PC-3 (cell line): ENCODE measurements at regions of chr2 and their contacts with region 1.

Region 1: DNA sequence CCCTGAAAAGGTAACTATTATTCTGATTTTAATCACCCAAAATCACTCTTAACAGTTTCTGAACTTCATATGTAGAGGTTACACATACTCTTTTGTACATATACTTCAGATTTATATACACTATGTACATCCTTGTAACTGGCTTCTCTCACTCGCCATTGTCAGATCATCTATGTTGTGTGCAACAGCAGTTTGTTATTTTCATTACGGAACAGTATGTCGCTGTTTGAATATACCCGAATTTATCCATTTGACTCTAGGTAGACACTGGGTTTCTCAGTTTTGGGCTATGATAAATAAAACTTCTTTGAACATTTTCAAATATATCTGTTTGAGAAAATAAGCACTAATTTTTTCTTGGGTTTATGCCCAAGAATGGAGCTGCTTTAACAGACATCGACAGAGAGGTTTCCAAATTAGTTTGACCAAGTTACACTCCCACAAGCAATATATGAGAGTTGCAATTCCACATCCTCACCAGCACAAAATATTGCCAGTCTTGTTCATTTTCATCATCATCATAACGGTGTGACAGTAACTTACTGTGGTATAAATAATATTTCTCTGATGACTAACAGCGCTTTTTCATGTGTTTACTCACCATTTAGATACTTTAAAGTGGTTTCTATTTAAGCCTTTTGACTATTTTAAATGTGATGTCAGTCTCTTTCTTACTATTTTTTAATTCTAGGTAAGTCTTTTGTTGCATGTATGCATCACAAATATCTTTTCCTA is 80.9 kb downstream of the SMC6 start:
- DNase-seq: peak; percentile 69
- ATAC-seq: peak; percentile 94
- H3K4me3 ChIP-seq: no peak overlapping the region
- H3K27ac ChIP-seq: no peak overlapping the region
- H3K4me1 ChIP-seq: peaks cover 7% of the 10 kb centered on the region; the same call in 1 of the 2 replicates
- H3K27me3 ChIP-seq: no peaks in the 10 kb centered on the region
- CTCF ChIP-seq: peak; percentile 30; the same call in 1 of the 2 replicates

Region 2: DNA sequence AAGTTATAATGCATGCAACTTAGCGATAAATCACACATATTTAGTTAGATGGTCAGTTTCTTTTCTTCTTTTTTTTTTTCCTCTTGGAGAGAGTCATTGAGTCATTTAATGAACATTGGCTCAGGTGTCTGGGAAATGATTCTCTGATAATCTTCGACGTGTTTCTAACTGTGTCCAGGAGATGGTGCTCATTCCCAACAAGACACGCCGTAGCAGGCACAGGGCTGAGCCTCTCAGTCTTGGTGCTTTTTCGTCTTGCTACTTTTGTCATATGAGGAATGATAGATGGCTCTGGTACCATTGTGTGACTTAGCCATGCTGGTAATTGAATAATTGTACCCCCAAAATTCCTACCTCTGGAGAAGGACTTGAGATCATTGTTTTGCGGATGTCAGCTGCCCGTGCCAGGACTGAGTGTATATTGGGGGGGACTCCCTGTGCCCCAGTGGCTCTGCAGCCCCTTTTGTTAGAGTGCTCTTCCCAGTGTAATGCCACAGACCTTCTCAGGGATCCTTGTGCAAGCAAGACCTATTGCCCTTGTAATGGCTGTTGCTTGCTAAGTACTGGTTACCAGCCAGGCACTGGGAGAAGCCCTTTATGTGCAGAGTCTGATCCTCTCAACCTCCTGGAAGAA is 899.6 kb before region 1 on chr2:
- CTCF ChIA-PET with region 1: no interaction called
- POLR2A ChIA-PET with region 1: no interaction called
- intact Hi-C with region 1: loop called (anchors 5 kb)
- DNase-seq: peak; percentile 56
- ATAC-seq: no peak
- H3K4me3 ChIP-seq: no peak overlapping the region
- H3K27ac ChIP-seq: no peak overlapping the region
- H3K4me1 ChIP-seq: no peaks in the 10 kb centered on the region
- H3K27me3 ChIP-seq: 0 out of 2 replicates have a peak, but pooled peaks cover 3% of the 10 kb centered on the region
- CTCF ChIP-seq: peak; percentile 68

Region 3: GRCh38 chr2:17309741-17310339 is 362.9 kb before region 1 on chr2:
- CTCF ChIA-PET with region 1: no interaction called
- POLR2A ChIA-PET with region 1: no interaction called
- intact Hi-C with region 1: loop called (anchors 10 kb)
- DNase-seq: peak; percentile 60
- ATAC-seq: no peak; the same call in 1 of the 2 replicates
- H3K4me3 ChIP-seq: no peak overlapping the region
- H3K27ac ChIP-seq: no peak overlapping the region
- H3K4me1 ChIP-seq: no peaks in the 10 kb centered on the region
- H3K27me3 ChIP-seq: peaks cover 6% of the 10 kb centered on the region; the same call in 1 of the 2 replicates
- CTCF ChIP-seq: peak; percentile 74

Region 4: GRCh38 chr2:17470855-17471641 is 201.7 kb before region 1 on chr2:
- CTCF ChIA-PET with region 1: no interaction called
- POLR2A ChIA-PET with region 1: no interaction called
- intact Hi-C with region 1: loop called (anchors 1 kb)
- DNase-seq: peak; percentile 43
- ATAC-seq: peak; percentile 27; the same call in 1 of the 2 replicates
- H3K4me3 ChIP-seq: peak overlapping the region; percentile 42
- H3K27ac ChIP-seq: no peak overlapping the region
- H3K4me1 ChIP-seq: peaks cover 8% of the 10 kb centered on the region; the same call in 1 of the 2 replicates
- H3K27me3 ChIP-seq: no peaks in the 10 kb centered on the region
- CTCF ChIP-seq: peak; percentile 78

Region 5: GRCh38 chr2:17646081-17646554 is 26.6 kb before region 1 on chr2:
- CTCF ChIA-PET with region 1: interaction called, 43 read pairs
- POLR2A ChIA-PET with region 1: no interaction called
- intact Hi-C with region 1: loop called (anchors 1 kb)
- DNase-seq: peak; percentile 85
- ATAC-seq: peak; percentile 57
- H3K4me3 ChIP-seq: no peak overlapping the region
- H3K27ac ChIP-seq: no peak overlapping the region
- H3K4me1 ChIP-seq: peaks cover 18% of the 10 kb centered on the region
- H3K27me3 ChIP-seq: no peaks in the 10 kb centered on the region
- CTCF ChIP-seq: peak; percentile 86